ENCODE measurements at regions of chr10 and their contacts with region 1.

Region 1: GRCh38 chr10:68826764-68827591 is at the start of gene STOX1:
- DNase-seq: peak; percentile 43
- ATAC-seq: peak; percentile 82
- H3K4me3 ChIP-seq: peak within 1 kb of the TSS; percentile 72 to 89 (median 77)
- H3K27ac ChIP-seq: peak within 1 kb of the TSS; percentile 76
- H3K4me1 ChIP-seq: peaks cover 19% of the 10 kb centered on the region
- H3K27me3 ChIP-seq: no peaks in the 10 kb centered on the region
- CTCF ChIP-seq: peak; percentile 30; the same call in 1 of the 2 replicates
- EP300 ChIP-seq: no peak
- POLR2A ChIP-seq: peak in 1 of 2 experiments; percentile 52; a peak in 1 of 4 replicates
- RAD21 ChIP-seq: peak; percentile 34; the same call in 1 of the 2 replicates
- total RNA-seq, gene STOX1: 6.0 and 9.4 TPM in 2 replicates

Region 2: GRCh38 chr10:67401711-67402110 is 1425.3 kb before region 1 on chr10:
- CTCF ChIA-PET with region 1: no interaction called
- POLR2A ChIA-PET with region 1: no interaction called
- in situ Hi-C with region 1: no loop called
- intact Hi-C with region 1: no loop called
- DNase-seq: no peak
- ATAC-seq: no peak
- H3K4me3 ChIP-seq: no peak overlapping the region
- H3K27ac ChIP-seq: no peak overlapping the region
- H3K4me1 ChIP-seq: no peaks in the 10 kb centered on the region
- H3K27me3 ChIP-seq: no peaks in the 10 kb centered on the region
- CTCF ChIP-seq: no peak
- EP300 ChIP-seq: no peak
- POLR2A ChIP-seq: no peak
- RAD21 ChIP-seq: no peak

Region 3: DNA sequence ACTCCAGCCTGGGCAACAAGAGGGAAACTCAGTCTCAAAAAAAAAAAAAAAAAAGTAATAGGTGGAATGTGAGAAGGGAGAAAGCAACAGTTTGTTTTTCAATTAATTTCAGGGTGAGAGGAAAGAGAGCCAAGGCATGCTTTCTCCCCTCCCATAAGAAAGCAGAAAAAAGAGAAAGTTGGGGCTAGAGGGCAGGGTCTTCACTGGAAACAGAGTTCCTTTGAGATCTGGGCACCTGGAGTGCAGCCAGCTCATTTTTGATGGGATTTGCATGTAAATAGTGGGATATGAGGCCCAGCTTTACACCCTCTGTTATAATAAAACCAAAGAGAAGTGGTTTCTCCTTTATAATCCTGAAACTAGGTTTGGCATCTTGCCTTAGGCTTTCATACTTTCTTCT is 13.4 kb before region 1 on chr10:
- CTCF ChIA-PET with region 1: no interaction called
- POLR2A ChIA-PET with region 1: interaction called, 10 read pairs
- in situ Hi-C with region 1: no loop called
- intact Hi-C with region 1: no loop called
- DNase-seq: no peak
- ATAC-seq: no peak
- H3K4me3 ChIP-seq: no peak overlapping the region
- H3K27ac ChIP-seq: no peak overlapping the region
- H3K4me1 ChIP-seq: peaks cover 14% of the 10 kb centered on the region
- H3K27me3 ChIP-seq: no peaks in the 10 kb centered on the region; a peak in 1 of 5 replicates
- CTCF ChIP-seq: no peak
- EP300 ChIP-seq: no peak
- POLR2A ChIP-seq: no peak
- RAD21 ChIP-seq: no peak

Region 4: DNA sequence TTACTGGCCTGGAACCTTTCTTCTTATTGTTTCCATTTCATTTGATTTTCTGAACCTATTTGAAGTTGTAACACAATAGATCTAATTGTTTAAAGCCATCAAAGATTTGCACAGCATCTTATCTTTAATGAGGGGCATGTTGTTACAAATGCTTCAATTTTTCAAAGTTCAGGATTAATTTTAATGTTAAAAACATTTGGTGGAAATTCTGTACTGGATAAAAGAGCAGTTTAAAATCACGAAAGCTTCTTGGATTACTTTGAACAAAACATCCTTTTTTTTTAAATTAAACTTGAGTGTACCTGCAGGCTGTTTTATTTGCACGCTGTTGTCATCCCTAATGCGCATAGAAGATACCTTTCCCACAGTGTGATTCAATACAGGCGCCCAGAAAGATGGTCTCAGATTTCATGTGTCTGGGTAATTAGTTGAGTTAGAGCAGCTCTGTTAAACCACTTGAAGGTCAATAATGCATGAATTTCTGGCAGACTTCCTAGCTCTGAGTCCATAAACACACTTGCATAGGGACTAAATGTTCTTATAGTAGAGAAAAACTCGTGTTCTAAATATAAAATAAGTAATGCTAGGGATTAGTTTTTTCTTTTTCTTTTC is 44.9 kb after region 1 on chr10:
- CTCF ChIA-PET with region 1: no interaction called
- POLR2A ChIA-PET with region 1: interaction called, 31 read pairs
- in situ Hi-C with region 1: no loop called
- intact Hi-C with region 1: loop called (anchors 5 kb)
- DNase-seq: peak; percentile 46
- ATAC-seq: no peak
- H3K4me3 ChIP-seq: no peak overlapping the region; a peak in 1 of 6 replicates
- H3K27ac ChIP-seq: peak overlapping the region; percentile 63
- H3K4me1 ChIP-seq: peaks cover 65% of the 10 kb centered on the region
- H3K27me3 ChIP-seq: no peaks in the 10 kb centered on the region
- CTCF ChIP-seq: no peak
- EP300 ChIP-seq: no peak
- POLR2A ChIP-seq: no peak
- RAD21 ChIP-seq: no peak

Measured in HepG2 (cell line).